Spleen (tissue), 13 donors: ENCODE measurements at regions of chr2 and their contacts with region 1.

Region 1: DNA sequence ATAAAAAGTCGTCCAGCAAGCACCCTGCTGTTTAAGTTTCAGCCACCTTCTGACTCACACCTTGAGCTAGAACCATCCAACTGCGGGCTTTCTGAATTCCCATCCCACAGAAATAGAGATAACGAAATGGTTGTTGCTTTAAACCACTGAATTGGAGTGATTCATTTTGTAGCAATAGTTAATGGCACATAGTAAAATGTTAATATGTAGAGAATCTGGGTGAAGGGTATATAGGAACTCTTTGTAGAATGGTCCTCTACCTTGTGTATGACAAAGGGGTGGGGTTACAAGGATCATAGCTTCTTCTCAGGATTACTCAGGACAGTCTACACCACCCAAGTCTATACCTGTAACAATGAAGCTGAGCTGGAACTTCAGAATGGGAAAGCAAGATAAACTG is 2.4 kb upstream of the MAPRE3 start:
- DNase-seq: no peak
- H3K4me3 ChIP-seq: no peak overlapping the region
- H3K27ac ChIP-seq: no peak overlapping the region
- H3K4me1 ChIP-seq: peaks cover 3 to 32% (median 17%) of the 10 kb centered on the region in 6 donors
- H3K27me3 ChIP-seq: peaks cover 0 to 39% (median 0%) of the 10 kb centered on the region in 7 donors
- CTCF ChIP-seq: no peak
- POLR2A ChIP-seq: no peak

Region 2: GRCh38 chr2:27271631-27272340 is 303.8 kb after region 1 on chr2:
- intact Hi-C with region 1: loop called (anchors 10 kb)
- DNase-seq: no peak
- H3K4me3 ChIP-seq: no peak overlapping the region
- H3K27ac ChIP-seq: no peak overlapping the region
- H3K4me1 ChIP-seq: no peaks in the 10 kb centered on the region
- H3K27me3 ChIP-seq: peaks cover 0 to 29% (median 0%) of the 10 kb centered on the region in 7 donors
- CTCF ChIP-seq: no peak
- POLR2A ChIP-seq: no peak